Ovary (tissue), 10 donors: ENCODE measurements at regions of chr16 and their contacts with region 1.

Region 1: GRCh38 chr16:87778830-87779579 is 13.2 kb upstream of the KLHDC4 start:
- DNase-seq: peak; percentile 73 to 91 (median 86)
- H3K4me3 ChIP-seq: no peak overlapping the region
- H3K27ac ChIP-seq: no peak overlapping the region
- H3K4me1 ChIP-seq: no peaks in the 10 kb centered on the region
- H3K27me3 ChIP-seq: no peaks in the 10 kb centered on the region
- CTCF ChIP-seq: peak; percentile 89 to 94 (median 92)
- EP300 ChIP-seq: no peak
- POLR2A ChIP-seq: no peak

Region 2: DNA sequence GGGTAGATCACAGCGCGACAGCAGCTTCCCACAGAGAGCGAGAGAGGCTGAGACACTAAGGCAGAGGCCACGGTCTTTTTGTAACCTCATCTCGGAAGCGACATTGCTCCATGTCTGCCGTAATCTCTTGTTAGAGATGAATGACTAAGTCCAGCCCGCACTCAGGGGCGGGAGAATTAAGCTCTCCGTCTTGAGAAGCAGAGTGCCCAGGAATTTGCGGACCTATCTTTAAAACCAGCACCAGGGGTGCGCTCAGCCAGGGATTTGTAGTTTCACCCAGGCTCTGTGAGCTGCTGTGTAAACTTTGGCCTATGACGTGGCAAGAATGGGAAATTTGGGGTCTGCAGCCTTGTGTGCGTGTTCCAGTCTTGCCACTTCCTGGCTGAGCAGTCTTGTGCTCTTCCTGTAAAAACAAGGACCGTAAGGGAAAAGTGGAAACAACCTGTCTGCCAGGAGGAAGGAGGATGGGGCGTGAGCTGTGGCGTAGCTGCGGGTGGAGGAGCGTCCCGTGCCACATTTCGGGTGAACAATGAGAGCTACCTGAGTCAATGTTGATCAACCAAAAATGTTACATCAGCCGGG is 192.7 kb before region 1 on chr16:
- intact Hi-C with region 1: loop called in 1 of 4 experiments (anchors 5 kb)
- DNase-seq: no peak
- H3K4me3 ChIP-seq: no peak overlapping the region
- H3K27ac ChIP-seq: no peak overlapping the region
- H3K4me1 ChIP-seq: peaks cover 20% of the 10 kb centered on the region
- H3K27me3 ChIP-seq: no peaks in the 10 kb centered on the region
- CTCF ChIP-seq: no peak
- EP300 ChIP-seq: no peak
- POLR2A ChIP-seq: no peak

Region 3: DNA sequence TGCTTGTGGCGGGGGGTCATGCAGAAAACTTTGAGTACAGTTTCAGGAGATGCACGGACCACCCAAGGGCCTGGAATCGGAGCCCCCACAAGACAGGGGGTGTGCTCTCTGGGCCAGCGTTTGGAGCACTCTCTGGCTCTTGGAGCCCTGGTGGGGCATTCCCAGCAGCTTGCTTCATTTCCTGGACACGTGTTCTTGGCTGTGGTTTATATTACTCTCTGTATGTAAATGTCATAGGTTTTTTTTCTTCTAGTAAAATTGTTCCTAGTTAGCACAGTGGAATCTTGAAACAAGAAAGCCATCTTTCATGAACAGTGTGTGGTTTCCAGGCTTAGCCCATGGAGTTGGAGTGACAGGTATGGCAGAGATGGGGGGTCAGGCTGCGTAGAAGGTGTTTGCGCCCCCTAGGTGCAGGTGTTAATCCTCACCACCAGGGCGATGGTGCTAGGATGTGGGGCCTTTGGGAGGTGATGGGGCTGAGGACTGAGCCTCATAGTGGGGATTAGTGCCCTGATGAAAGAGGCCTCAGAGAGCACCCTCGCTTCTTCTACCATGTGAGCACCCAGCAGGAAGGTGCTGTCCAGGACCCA is 96.9 kb before region 1 on chr16:
- intact Hi-C with region 1: no loop called
- DNase-seq: no peak
- H3K4me3 ChIP-seq: no peak overlapping the region
- H3K27ac ChIP-seq: no peak overlapping the region
- H3K4me1 ChIP-seq: no peaks in the 10 kb centered on the region
- H3K27me3 ChIP-seq: no peaks in the 10 kb centered on the region
- CTCF ChIP-seq: no peak
- EP300 ChIP-seq: no peak
- POLR2A ChIP-seq: no peak

Region 4: GRCh38 chr16:87853411-87854052 is 74.5 kb after region 1 on chr16:
- intact Hi-C with region 1: loop called in 1 of 4 experiments (anchors 10 kb)
- DNase-seq: peak; percentile 88 to 91 (median 89)
- H3K4me3 ChIP-seq: peak overlapping the region; percentile 13
- H3K27ac ChIP-seq: no peak overlapping the region
- H3K4me1 ChIP-seq: peaks cover 2% of the 10 kb centered on the region
- H3K27me3 ChIP-seq: no peaks in the 10 kb centered on the region
- CTCF ChIP-seq: no peak
- EP300 ChIP-seq: no peak
- POLR2A ChIP-seq: peak; percentile 10

Region 5: DNA sequence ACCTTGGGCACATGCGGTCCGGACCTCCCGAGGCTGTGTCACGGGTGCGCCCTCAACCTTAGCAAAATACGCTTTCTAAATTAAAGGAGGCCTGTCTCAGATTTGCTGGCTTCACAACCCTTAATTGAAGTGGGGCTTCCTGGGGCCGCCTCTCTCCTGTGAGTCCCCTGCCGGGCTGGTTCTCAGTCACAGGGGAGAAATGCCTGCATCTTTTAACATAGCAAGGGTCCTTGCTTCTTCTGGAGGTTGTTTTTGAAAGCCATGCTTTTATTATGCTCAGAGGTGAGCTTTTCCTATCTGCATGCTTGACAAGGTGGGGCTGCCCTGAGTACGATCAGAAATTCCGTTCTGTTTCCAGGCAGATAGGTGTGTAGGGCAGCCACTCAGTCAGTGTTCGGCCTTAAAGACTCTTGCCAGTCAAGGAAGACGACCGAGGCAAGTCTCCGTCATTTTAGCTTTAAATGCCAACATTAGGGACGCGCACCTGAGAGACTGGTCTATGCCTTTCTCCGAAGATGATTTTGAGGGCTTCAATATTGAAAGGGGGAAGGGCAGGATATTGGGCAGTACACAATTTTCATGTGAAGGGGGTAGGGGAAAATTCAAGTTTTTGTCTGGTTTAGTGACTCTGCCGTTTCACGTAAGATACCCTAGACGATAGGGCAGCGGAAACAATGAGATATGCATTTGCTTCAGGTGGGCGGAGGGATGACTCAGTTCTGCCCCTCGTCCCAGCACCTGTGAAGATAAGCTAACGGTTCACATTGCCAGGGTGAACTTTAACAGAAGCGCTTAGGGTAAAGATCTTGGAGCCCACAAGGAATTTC is 95.8 kb after region 1 on chr16:
- intact Hi-C with region 1: loop called (anchors 1 to 5 kb)
- DNase-seq: no peak
- H3K4me3 ChIP-seq: no peak overlapping the region
- H3K27ac ChIP-seq: no peak overlapping the region
- H3K4me1 ChIP-seq: peaks cover 1% of the 10 kb centered on the region
- H3K27me3 ChIP-seq: no peaks in the 10 kb centered on the region
- CTCF ChIP-seq: no peak
- EP300 ChIP-seq: no peak
- POLR2A ChIP-seq: no peak